ENCODE measurements at regions of chr2 and their contacts with region 1.

Region 1: GRCh38 chr2:138356178-138356577 is 145.4 kb upstream of the SPOPL start:
- DNase-seq: no peak
- ATAC-seq: peak in 1 of 8 donors; percentile 73
- H3K4me3 ChIP-seq: no peak overlapping the region
- H3K27ac ChIP-seq: no peak overlapping the region
- H3K4me1 ChIP-seq: peaks cover 0 to 6% (median 0%) of the 10 kb centered on the region in 9 donors
- H3K27me3 ChIP-seq: no peaks in the 10 kb centered on the region
- CTCF ChIP-seq: no peak

Region 2: DNA sequence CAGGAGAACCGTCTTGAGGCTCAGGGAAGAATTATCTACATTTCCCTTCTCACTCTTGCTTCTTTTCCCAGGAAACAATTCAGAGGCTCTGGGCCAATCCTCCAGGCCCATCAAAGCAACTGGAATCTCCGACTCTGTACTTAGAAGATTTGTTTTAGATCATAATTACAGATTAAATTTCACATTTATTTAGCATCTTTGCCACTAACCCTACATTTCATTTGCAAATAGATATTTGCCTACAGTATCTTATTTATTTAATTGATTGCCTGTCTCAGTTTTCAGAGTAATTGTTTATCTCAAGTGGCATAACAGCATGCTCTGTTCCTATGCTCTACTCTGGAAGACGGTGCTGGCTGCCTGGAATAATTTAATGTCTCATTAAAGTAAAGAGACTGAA is 178.5 kb before region 1 on chr2:
- intact Hi-C with region 1: no loop called
- DNase-seq: no peak
- ATAC-seq: no peak
- H3K4me3 ChIP-seq: no peak overlapping the region
- H3K27ac ChIP-seq: no peak overlapping the region
- H3K4me1 ChIP-seq: peaks cover 0 to 1% (median 0%) of the 10 kb centered on the region in 9 donors
- H3K27me3 ChIP-seq: no peaks in the 10 kb centered on the region
- CTCF ChIP-seq: no peak

Region 3: DNA sequence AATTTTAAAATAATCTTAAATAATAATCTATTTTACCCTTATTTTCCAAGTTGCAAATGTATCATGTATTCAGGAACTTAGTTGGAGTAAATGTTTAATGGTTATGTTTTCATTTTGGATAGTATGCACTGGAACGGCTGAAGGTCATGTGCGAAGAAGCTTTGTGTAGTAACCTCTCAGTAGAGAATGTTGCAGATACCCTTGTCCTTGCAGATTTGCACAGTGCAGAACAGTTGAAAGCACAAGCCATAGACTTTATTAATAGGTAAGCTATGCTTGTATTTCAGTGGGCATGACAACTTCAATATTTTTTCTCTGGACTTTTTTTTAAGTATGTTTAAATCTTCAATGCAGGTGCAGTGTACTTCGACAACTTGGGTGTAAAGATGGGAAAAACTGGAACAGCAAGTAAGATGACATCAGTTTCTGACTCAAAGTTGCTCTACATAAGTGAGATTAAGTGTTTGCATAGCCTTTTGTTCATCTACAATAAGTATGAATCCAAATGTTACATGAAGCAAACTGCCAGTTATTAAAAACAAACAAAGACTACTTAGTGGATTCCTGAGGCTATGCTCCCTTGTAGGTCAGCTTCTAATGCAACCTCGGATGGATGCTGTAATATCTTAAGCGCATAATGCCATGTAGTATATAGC is 208.5 kb after region 1 on chr2:
- intact Hi-C with region 1: no loop called
- DNase-seq: no peak
- ATAC-seq: peak in 1 of 8 donors; percentile 50
- H3K4me3 ChIP-seq: no peak overlapping the region
- H3K27ac ChIP-seq: no peak overlapping the region
- H3K4me1 ChIP-seq: peaks cover 0 to 5% (median 0%) of the 10 kb centered on the region in 9 donors
- H3K27me3 ChIP-seq: no peaks in the 10 kb centered on the region
- CTCF ChIP-seq: no peak

Region 4: DNA sequence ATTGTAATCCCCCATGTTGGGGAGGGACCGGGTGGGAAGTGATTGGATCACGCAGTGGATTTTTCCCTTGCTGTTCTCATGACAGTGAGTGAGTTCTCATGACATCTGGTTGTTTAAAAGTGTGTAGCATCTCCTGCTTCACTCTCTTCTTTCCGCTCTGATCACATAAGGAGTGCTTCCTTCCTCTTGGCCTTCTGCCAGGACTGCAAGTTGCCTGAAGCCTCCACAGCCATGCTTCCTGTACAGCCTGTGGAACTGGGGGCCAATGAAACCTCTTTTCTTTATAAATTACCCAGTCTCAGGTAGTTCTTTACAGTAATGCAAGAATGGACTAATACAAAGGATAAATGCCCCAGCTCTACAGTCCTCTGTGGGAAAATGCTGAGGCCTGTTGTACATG is 861.5 kb after region 1 on chr2:
- intact Hi-C with region 1: loop called in 1 of 10 experiments (anchors 5 kb)
- DNase-seq: no peak
- ATAC-seq: no peak
- H3K4me3 ChIP-seq: no peak overlapping the region
- H3K27ac ChIP-seq: no peak overlapping the region
- H3K4me1 ChIP-seq: no peaks in the 10 kb centered on the region
- H3K27me3 ChIP-seq: no peaks in the 10 kb centered on the region
- CTCF ChIP-seq: no peak

Measured in heart right ventricle (tissue), 16 donors.